ENCODE measurements at regions of chr4 and their contacts with region 1.

Region 1: DNA sequence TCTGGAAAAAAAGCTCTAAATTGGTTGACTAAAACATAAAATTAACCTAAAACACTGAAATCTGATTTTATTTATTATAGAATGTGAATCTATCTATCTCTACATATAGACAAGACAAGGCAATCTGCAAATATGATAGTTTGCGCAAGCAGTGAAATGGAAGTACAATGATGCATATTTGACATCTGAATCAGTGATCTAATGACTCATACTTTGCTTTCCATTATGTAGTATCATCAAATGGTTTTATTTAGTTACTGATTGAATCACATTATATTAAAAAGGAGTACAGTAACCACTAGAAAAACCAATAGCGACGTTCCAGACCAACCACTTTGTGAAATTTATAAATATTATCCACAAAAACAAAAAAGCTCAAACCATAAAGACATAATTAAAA is 1969.4 kb downstream of the PCDH7 start:
- DNase-seq: no peak
- ATAC-seq: no peak
- H3K4me3 Mint-ChIP-seq: no peak overlapping the region
- H3K27ac Mint-ChIP-seq: no peak overlapping the region
- H3K4me1 Mint-ChIP-seq: no peaks in the 10 kb centered on the region
- H3K27me3 Mint-ChIP-seq: no peaks in the 10 kb centered on the region

Region 2: DNA sequence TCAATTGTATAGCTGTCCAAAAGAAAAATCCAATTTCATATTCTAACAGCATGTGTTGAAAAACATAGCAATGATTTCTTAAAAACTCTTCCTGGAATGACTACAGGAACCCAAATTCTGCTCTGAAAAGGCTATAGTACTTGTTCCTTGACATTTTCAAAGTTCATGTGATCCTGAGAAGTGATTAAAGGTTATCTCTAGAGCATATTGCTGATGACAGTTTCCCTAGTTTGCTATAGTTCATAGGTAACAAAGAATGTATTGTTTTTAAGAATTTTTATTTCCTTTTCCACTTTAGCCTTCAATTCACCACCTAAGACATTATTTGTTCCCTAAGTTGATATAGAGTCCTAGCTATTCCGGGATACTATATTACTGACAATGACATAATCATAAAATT is 354.8 kb before region 1 on chr4:
- CTCF ChIA-PET with region 1: no interaction called
- POLR2A ChIA-PET with region 1: interaction called, 10 read pairs
- intact Hi-C with region 1: no loop called
- DNase-seq: no peak
- ATAC-seq: no peak
- H3K4me3 Mint-ChIP-seq: no peak overlapping the region
- H3K27ac Mint-ChIP-seq: no peak overlapping the region
- H3K4me1 Mint-ChIP-seq: no peaks in the 10 kb centered on the region
- H3K27me3 Mint-ChIP-seq: no peaks in the 10 kb centered on the region

Region 3: DNA sequence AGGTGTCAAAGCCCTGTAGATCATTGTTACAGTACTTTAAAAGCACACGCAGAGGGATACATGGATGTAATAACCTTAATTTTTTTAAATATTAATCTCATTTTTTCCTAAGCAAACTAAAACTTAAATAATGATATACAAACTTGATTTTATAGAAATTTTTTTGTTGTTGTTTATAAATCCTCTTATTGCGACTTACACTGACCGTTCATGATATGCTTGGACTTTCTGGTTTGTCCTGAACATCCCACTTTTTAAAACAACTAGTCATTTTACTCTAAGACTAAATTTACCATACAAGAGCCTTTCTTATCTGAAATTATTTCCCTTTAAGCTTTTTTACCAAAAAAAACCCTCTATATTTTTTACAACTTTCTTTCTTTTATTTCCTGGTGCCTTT is 136.6 kb after region 1 on chr4:
- CTCF ChIA-PET with region 1: no interaction called
- POLR2A ChIA-PET with region 1: no interaction called
- intact Hi-C with region 1: no loop called
- DNase-seq: no peak
- ATAC-seq: no peak
- H3K4me3 Mint-ChIP-seq: no peak overlapping the region
- H3K27ac Mint-ChIP-seq: no peak overlapping the region
- H3K4me1 Mint-ChIP-seq: no peaks in the 10 kb centered on the region
- H3K27me3 Mint-ChIP-seq: no peaks in the 10 kb centered on the region